Right ventricle myocardium superior (tissue), 1 donor: ENCODE measurements at regions of chr1 and their contacts with region 1.

Region 1: DNA sequence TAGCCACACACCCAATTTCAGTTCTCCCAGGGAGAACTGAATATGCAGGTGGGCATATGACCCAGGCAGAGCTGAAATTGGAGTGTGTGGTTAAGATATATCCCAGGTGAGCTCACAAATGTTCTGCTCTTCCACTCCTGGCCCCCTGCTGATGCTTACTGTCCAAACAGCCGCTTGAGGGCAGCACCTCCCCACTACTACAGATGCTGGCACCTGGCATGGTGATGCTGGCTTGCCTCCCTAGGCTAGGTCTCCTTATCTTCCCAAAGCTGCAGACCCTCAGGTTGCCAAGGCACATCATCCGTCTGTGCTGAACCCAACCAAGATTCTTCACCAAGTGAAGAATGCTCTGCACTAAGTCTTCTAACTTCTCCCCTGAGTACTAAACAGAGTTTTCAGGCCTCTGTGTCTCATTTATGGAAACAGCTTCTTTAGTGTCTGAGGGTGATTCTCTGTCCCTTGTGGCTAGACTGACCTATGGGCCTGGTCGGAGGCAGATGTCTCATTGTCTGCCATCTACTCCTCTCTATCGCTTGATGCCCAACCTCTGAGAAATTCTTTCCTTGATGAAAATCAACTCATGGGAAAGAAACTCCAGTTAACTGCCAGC is 27.2 kb downstream of the XCL1 start:
- DNase-seq: peak; percentile 83
- ATAC-seq: peak; percentile 95

Region 2: DNA sequence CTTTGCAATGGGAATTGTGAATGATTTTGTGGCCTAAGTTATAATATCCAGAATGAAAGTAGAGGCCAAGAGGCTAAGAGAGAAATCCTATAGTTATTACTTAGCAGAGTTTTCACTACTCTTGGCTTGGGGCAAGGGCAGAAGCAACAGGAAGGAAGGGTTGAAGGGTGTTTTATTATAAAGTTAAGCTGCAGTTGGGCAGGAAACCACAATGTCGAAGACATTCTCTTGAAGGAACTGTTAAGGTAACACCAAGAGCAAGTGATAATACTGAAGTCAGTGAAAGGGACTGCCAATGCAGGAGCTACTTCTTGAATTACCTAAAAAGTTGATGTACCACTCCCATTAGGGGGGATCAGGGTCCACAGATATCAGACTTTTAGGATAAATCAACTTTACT is 68.1 kb before region 1 on chr1:
- intact Hi-C with region 1: no loop called
- DNase-seq: no peak
- ATAC-seq: no peak

Region 3: DNA sequence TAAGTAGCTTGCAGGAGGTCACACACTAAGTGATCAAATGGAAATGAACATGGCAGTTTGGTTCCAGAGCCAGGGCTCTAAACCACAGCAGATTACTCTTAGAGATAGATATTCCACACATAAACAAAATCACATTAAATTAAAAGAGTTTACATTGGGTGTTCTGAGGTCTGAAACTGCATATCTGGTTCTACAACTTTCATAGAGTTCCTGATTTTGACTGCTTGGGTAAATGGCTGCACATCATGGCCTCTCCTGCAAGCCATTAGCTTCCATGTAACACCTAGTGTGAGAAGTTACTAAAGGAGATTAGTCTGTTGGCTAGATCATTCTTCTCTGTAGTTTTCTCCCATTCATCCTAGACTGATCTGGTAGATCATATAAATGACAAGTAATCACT is 47.0 kb before region 1 on chr1:
- intact Hi-C with region 1: no loop called
- DNase-seq: no peak
- ATAC-seq: no peak

Region 4: DNA sequence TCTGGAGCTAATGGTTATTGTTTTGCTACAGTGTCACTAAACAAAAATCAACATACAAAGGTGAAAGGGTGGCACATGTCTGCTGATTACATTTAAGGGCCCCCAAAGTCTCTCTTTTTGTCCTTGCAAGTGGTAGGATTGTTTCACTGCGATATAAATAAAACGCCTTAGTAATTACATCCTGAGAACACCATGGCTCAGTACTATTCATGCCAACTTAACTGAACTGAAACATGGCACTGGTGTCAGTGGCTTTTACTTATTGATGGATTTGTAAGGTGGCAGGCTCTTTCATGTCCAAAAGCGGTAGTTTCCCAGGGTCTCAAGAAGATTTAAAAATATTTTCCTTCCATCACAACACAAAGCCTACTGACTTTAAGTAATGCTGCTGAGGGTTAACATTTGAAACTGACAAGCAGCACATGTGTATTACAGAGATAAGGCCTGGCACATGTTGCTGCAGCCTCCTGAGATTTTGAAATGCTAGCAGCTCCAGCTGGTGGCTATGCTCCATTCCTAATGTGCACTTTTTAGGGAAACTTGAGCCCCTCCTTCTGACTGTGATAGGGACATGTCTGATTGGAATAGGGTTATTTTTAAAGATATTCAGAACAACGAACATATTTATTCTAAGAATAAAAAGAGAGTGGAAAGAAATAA is 589.7 kb after region 1 on chr1:
- intact Hi-C with region 1: loop called (anchors 10 kb)
- DNase-seq: peak; percentile 40
- ATAC-seq: peak; percentile 97

Region 5: GRCh38 chr1:169348383-169349036 is 744.9 kb after region 1 on chr1:
- intact Hi-C with region 1: loop called (anchors 5 kb)
- DNase-seq: no peak
- ATAC-seq: no peak